Caco-2 (cell line): ENCODE measurements at regions of chr11 and their contacts with region 1.

Region 1: GRCh38 chr11:72030472-72031045 is 31.9 kb downstream of the IL18BP start:
- DNase-seq: no peak
- H3K4me3 ChIP-seq: no peak overlapping the region
- H3K4me3 Mint-ChIP-seq: no peak overlapping the region
- H3K27ac Mint-ChIP-seq: peak overlapping the region; percentile 58
- H3K4me1 ChIP-seq: peaks cover 9% of the 10 kb centered on the region
- H3K4me1 Mint-ChIP-seq: peaks cover 12% of the 10 kb centered on the region
- H3K27me3 ChIP-seq: no peaks in the 10 kb centered on the region
- H3K27me3 Mint-ChIP-seq: no peaks in the 10 kb centered on the region
- CTCF ChIP-seq: no peak

Region 2: GRCh38 chr11:72015511-72016171 is 14.9 kb before region 1 on chr11:
- CTCF ChIA-PET with region 1: interaction called, 43 read pairs
- POLR2A ChIA-PET with region 1: no interaction called
- intact Hi-C with region 1: no loop called
- DNase-seq: peak; percentile 76 to 80
- H3K4me3 ChIP-seq: no peak overlapping the region
- H3K4me3 Mint-ChIP-seq: no peak overlapping the region
- H3K27ac Mint-ChIP-seq: peak overlapping the region; percentile 33
- H3K4me1 ChIP-seq: no peaks in the 10 kb centered on the region
- H3K4me1 Mint-ChIP-seq: no peaks in the 10 kb centered on the region
- H3K27me3 ChIP-seq: no peaks in the 10 kb centered on the region
- H3K27me3 Mint-ChIP-seq: no peaks in the 10 kb centered on the region
- CTCF ChIP-seq: peak; percentile 63 to 89

Region 3: DNA sequence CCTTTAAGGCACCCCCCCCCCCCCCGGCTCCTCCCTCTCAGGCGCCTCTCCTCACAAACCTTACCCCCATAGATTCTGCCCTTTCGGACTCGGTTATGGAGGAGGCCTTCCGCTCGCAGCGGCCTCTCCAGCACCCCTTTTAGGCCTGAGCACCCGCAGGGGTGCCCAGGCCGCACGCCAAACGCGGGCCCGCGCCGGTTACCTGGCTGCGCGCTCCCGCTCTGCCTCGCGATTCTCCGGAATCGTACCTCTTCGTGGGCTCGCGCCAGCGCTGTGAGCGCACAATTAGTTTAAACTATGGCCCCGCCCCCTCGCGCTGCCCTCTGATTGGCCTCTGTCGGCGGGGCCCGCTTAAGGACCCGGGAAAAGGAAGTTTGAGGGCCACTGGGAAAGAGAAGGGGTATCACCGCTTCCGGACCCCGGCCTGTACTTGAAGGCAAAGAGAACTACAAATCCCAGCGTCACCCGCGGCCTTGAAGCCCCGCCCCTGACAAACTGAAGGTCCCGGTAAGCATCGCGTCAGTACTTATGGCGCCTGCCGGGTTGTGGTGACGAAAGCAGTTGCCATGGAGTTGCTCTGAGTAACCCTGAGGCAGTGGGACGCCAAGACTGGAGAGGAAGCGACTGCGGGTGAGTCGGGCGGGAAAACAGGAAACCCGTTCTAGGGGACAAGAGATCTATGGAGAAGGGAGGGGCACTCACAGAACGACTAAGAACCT is 49.9 kb after region 1 on chr11 and contains the starts of genes LRRC51 and NUMA1:
- CTCF ChIA-PET with region 1: interaction called, 43 read pairs
- POLR2A ChIA-PET with region 1: no interaction called
- intact Hi-C with region 1: loop called (anchors 2 kb)
- DNase-seq: peak; percentile 100
- H3K4me3 ChIP-seq: peak within 1 kb of the TSS; percentile 92
- H3K4me3 Mint-ChIP-seq: peak within 1 kb of the TSS; percentile 86
- H3K27ac Mint-ChIP-seq: peak within 1 kb of the TSS; percentile 99
- H3K4me1 ChIP-seq: peaks cover 19% of the 10 kb centered on the region
- H3K4me1 Mint-ChIP-seq: peaks cover 28% of the 10 kb centered on the region
- H3K27me3 ChIP-seq: no peaks in the 10 kb centered on the region
- H3K27me3 Mint-ChIP-seq: no peaks in the 10 kb centered on the region
- CTCF ChIP-seq: no peak
- total RNA-seq, gene LRRC51: 13.7 and 13.8 TPM in 2 replicates
- total RNA-seq, gene NUMA1: 182 and 190 TPM in 2 replicates

Region 4: DNA sequence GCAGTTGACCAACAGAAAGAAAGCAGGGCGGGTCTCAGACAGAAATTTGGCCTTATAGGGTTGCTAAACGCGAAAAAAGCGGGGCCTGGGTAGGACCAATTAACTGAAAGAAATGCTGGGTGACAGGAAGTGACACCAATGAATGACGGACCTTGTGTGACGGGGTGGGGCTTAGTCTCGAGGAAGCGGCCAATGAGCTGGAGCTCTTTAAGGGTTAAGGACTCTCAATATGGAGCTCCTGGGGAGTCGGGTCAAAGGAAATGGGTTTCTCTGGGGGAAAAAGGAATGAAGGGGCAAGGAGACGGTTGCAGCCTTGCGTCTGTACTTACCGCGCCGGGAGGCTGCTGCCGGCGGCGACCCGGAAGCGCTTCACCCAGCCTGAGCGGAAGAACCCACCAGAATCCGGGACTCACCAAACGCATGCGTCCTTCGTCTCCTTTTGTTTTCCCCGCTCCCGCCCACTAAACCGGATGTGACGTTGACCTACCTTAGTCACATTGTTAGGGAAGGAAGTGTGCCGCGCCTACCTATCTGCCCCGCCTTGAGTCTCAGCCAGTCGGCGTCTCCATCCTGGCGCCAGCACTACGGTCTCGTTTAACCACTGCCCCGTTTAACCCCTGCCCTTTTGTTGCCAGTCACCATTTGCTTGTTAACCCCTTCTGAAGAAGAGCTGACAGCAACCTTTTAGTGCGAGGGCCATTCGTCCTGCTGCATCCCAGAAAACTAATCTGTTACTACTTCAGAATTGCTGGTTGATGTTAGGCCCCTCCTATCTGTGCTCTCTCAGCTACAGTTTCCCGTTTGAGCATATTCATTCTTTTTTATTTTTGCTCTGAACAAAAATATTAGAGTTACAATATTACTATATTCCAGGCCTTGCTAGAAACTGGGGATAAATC is 82.0 kb after region 1 on chr11 and contains the start of gene ANAPC15:
- CTCF ChIA-PET with region 1: interaction called, 10 read pairs
- POLR2A ChIA-PET with region 1: interaction called, 3 read pairs
- intact Hi-C with region 1: loop called (anchors 1 kb)
- DNase-seq: peak; percentile 99 to 100
- H3K4me3 ChIP-seq: peak within 1 kb of the TSS; percentile 52
- H3K4me3 Mint-ChIP-seq: peak within 1 kb of the TSS; percentile 94
- H3K27ac Mint-ChIP-seq: peak within 1 kb of the TSS; percentile 100
- H3K4me1 ChIP-seq: peaks cover 9% of the 10 kb centered on the region
- H3K4me1 Mint-ChIP-seq: no peaks in the 10 kb centered on the region
- H3K27me3 ChIP-seq: no peaks in the 10 kb centered on the region
- H3K27me3 Mint-ChIP-seq: no peaks in the 10 kb centered on the region
- CTCF ChIP-seq: no peak
- total RNA-seq, gene ANAPC15: 98.6 and 105 TPM in 2 replicates

Region 5: DNA sequence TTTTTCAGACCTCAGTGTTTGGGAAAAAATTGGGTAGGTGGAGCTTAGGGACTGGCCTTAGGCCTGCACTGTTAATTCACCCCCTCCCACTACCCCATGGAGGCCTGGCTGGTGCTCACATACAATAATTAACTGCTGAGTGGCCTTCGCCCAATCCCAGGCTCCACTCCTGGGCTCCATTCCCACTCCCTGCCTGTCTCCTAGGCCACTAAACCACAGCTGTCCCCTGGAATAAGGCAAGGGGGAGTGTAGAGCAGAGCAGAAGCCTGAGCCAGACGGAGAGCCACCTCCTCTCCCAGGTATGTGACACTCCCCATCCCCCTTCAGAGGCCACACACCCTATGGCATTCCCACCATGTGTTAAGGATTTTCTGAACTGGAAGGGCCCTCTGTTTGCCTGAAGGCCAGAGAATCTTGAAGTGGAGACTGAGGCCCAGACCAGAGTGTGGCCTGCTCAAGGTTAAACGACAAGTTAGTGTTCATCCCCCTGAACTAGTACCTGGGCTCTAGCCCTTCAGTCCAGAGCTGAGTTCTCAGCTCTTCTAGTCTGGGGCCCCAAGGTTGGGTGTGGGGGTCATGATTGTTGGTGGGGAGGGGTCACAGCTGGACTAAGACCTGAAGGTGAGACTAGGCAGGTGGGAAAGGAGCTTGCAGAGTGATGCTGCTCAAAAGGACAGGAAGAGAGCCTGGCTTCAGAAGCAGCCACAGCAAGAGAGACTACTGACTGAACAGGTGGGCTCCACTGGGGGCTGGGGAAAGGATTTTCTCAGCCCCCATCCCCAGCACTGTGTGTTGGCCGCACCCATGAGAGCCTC is 159.1 kb after region 1 on chr11:
- CTCF ChIA-PET with region 1: interaction called, 54 read pairs
- POLR2A ChIA-PET with region 1: no interaction called
- intact Hi-C with region 1: no loop called
- DNase-seq: peak; percentile 77 to 88
- H3K4me3 ChIP-seq: no peak overlapping the region
- H3K4me3 Mint-ChIP-seq: peak overlapping the region; percentile 27
- H3K27ac Mint-ChIP-seq: peak overlapping the region; percentile 93
- H3K4me1 ChIP-seq: peaks cover 34% of the 10 kb centered on the region
- H3K4me1 Mint-ChIP-seq: peaks cover 23% of the 10 kb centered on the region
- H3K27me3 ChIP-seq: no peaks in the 10 kb centered on the region
- H3K27me3 Mint-ChIP-seq: no peaks in the 10 kb centered on the region
- CTCF ChIP-seq: no peak

Region 6: GRCh38 chr11:72703267-72704008 is 672.9 kb after region 1 on chr11:
- CTCF ChIA-PET with region 1: no interaction called
- POLR2A ChIA-PET with region 1: no interaction called
- intact Hi-C with region 1: no loop called
- DNase-seq: no peak
- H3K4me3 ChIP-seq: no peak overlapping the region
- H3K4me3 Mint-ChIP-seq: no peak overlapping the region
- H3K27ac Mint-ChIP-seq: no peak overlapping the region
- H3K4me1 ChIP-seq: no peaks in the 10 kb centered on the region
- H3K4me1 Mint-ChIP-seq: no peaks in the 10 kb centered on the region
- H3K27me3 ChIP-seq: no peaks in the 10 kb centered on the region
- H3K27me3 Mint-ChIP-seq: no peaks in the 10 kb centered on the region
- CTCF ChIP-seq: no peak